A549 (cell line): ENCODE measurements at regions of chr11 and their contacts with region 1.

Region 1: GRCh38 chr11:88552377-88553062 is 215.0 kb upstream of the CTSC start:
- DNase-seq: peak; percentile 41 to 68
- ATAC-seq: peak; percentile 86 to 96
- H3K4me3 ChIP-seq: no peak overlapping the region
- H3K27ac ChIP-seq: no peak overlapping the region
- H3K4me1 ChIP-seq: peaks cover 18% of the 10 kb centered on the region
- CTCF ChIP-seq: peak; percentile 65
- EP300 ChIP-seq: no peak
- POLR2A ChIP-seq: no peak
- RAD21 ChIP-seq: peak; percentile 63 to 75

Region 2: DNA sequence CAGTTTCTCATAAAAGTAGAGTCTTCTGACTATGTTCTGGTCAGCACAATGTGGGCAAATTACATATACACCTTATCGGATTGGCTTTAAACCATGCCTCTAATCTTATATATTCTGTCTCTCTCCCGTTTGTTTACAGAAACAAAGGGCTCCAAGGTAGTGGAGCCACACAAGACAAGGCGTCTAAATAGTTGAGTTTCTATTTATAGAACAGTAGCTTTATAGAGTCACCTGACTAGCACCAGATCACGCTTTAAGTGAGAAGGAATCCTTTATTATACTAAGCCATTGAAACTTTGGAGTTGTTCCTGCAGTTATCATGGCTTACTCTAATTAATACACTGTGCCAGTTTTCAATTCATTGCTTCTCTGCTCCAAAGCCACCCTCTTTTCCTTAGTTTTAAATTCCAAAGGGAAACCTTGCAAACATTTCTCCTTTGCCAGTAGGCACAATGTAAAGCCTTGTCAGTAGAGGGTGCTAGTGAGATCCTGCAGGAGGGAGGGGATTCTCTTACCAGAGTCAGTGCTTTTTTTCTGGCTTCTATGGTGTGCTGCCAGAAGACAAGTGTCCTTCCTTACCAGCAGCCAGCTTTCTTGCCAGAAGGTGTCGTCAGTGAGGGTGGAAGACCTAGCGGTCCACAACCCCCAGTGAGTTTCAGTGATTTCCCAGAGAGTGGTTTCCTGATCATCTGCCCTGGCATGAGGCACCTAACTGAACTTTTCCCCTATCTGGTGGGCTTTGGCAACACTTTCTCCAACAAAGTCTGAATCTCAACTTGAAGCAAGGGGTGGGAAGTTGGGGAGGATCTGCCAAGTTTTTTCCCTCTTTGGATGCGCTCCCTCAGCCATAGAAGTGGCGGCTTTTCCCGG is 448.9 kb before region 1 on chr11:
- CTCF ChIA-PET with region 1: interaction called, 15 read pairs
- POLR2A ChIA-PET with region 1: interaction called, 4 read pairs
- DNase-seq: peak; percentile 58 to 95
- ATAC-seq: peak; percentile 96 to 99
- H3K4me3 ChIP-seq: peak overlapping the region; percentile 21
- H3K27ac ChIP-seq: peak overlapping the region; percentile 79 to 87
- H3K4me1 ChIP-seq: peaks cover 41% of the 10 kb centered on the region
- CTCF ChIP-seq: peak; percentile 89
- EP300 ChIP-seq: no peak
- POLR2A ChIP-seq: no peak
- RAD21 ChIP-seq: peak; percentile 70 to 77

Region 3: GRCh38 chr11:88529426-88529825 is 23.1 kb before region 1 on chr11:
- CTCF ChIA-PET with region 1: no interaction called
- POLR2A ChIA-PET with region 1: no interaction called
- DNase-seq: no peak
- ATAC-seq: no peak
- H3K4me3 ChIP-seq: no peak overlapping the region
- H3K27ac ChIP-seq: no peak overlapping the region
- H3K4me1 ChIP-seq: no peaks in the 10 kb centered on the region
- CTCF ChIP-seq: no peak
- EP300 ChIP-seq: no peak
- POLR2A ChIP-seq: no peak
- RAD21 ChIP-seq: no peak

Region 4: DNA sequence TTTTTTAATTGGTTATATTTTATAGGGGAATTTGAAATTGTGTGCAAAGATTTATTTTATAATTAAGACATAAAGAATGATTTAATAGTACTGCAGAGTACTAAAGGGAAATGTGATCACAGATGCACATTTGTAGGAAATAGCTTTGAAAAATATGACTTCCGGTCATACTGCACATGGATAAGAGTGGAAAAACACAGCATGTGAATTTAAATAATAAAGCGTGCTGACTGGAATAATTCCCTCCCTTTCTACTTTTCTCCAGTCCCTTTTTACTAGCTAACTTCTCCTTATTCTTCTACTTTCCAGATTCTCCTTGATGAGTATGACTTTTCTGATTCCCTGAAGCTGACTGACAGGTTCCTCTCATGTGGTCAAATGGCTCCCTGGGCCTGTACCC is 23.4 kb after region 1 on chr11:
- CTCF ChIA-PET with region 1: no interaction called
- POLR2A ChIA-PET with region 1: no interaction called
- DNase-seq: no peak
- ATAC-seq: no peak
- H3K4me3 ChIP-seq: no peak overlapping the region
- H3K27ac ChIP-seq: no peak overlapping the region
- H3K4me1 ChIP-seq: no peaks in the 10 kb centered on the region
- CTCF ChIP-seq: no peak
- EP300 ChIP-seq: no peak
- POLR2A ChIP-seq: no peak
- RAD21 ChIP-seq: no peak